HEK293T (cell line): ENCODE measurements at regions of chr11 and their contacts with region 1.

Region 1: GRCh38 chr11:58905721-58906477 is 33.4 kb upstream of the GLYATL1 start:
- DNase-seq: no peak

Region 2: DNA sequence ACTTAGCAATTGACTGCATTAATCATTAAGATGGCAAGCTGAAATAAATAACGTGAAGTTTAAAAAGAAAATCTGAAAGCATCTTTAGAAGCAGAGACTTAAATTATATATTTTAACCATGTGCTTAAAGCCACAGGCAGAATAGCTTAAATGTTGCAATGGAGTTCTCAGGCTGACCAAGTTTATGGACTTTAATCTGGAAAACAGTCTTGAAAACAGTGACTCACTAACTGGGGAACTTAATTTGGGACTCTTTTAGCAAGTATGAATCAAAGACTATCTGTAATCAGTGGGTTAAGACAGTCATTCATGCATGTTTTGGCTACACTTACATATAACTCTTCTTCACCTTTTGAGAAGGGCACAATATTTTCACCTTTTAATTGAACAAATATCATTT is 20.8 kb after region 1 on chr11:
- CTCF ChIA-PET with region 1: interaction called, 10 read pairs
- POLR2A ChIA-PET with region 1: no interaction called
- DNase-seq: no peak